ENCODE measurements at regions of chr2 and their contacts with region 1.

Region 1: GRCh38 chr2:40244675-40245074 is 207.2 kb downstream of the SLC8A1 start:
- DNase-seq: peak; percentile 41
- ATAC-seq: peak; percentile 36
- H3K4me3 Mint-ChIP-seq: no peak overlapping the region
- H3K27ac Mint-ChIP-seq: no peak overlapping the region
- H3K4me1 Mint-ChIP-seq: no peaks in the 10 kb centered on the region
- H3K27me3 Mint-ChIP-seq: peaks cover 4% of the 10 kb centered on the region

Region 2: DNA sequence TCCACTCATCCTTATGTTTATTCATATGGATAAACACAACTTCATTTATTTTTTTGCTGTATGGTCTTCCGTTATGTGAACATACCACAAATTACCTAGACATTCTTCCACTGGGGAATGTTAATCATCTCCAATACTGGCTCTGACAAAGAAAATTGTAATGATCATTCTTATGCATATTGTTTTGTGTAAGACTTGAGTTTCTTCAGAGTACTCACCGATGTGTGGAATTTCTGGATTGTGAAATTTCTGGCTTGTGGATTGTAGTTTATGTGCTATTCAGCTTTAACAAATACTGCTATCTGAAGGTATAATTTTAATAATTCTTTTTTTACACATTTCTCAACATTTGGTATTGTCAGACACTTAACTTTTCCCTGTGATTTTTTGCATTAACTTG is 253.4 kb before region 1 on chr2:
- CTCF ChIA-PET with region 1: no interaction called
- POLR2A ChIA-PET with region 1: no interaction called
- intact Hi-C with region 1: no loop called
- DNase-seq: no peak
- ATAC-seq: no peak
- H3K4me3 Mint-ChIP-seq: no peak overlapping the region
- H3K27ac Mint-ChIP-seq: no peak overlapping the region
- H3K4me1 Mint-ChIP-seq: peaks cover 10% of the 10 kb centered on the region
- H3K27me3 Mint-ChIP-seq: no peaks in the 10 kb centered on the region

Region 3: GRCh38 chr2:40282428-40282827 is 37.8 kb after region 1 on chr2:
- CTCF ChIA-PET with region 1: no interaction called
- POLR2A ChIA-PET with region 1: no interaction called
- intact Hi-C with region 1: no loop called
- DNase-seq: no peak
- ATAC-seq: no peak
- H3K4me3 Mint-ChIP-seq: no peak overlapping the region
- H3K27ac Mint-ChIP-seq: no peak overlapping the region
- H3K4me1 Mint-ChIP-seq: no peaks in the 10 kb centered on the region
- H3K27me3 Mint-ChIP-seq: no peaks in the 10 kb centered on the region

Region 4: GRCh38 chr2:40760071-40760666 is 515.5 kb after region 1 on chr2:
- CTCF ChIA-PET with region 1: no interaction called
- POLR2A ChIA-PET with region 1: no interaction called
- intact Hi-C with region 1: loop called in 1 of 2 experiments (anchors 10 kb)
- DNase-seq: peak; percentile 35
- ATAC-seq: peak; percentile 68
- H3K4me3 Mint-ChIP-seq: no peak overlapping the region
- H3K27ac Mint-ChIP-seq: no peak overlapping the region
- H3K4me1 Mint-ChIP-seq: peaks cover 4% of the 10 kb centered on the region
- H3K27me3 Mint-ChIP-seq: no peaks in the 10 kb centered on the region